CD8-positive, alpha-beta T cell (primary cell): ENCODE measurements at regions of chr19 and their contacts with region 1.

Region 1: DNA sequence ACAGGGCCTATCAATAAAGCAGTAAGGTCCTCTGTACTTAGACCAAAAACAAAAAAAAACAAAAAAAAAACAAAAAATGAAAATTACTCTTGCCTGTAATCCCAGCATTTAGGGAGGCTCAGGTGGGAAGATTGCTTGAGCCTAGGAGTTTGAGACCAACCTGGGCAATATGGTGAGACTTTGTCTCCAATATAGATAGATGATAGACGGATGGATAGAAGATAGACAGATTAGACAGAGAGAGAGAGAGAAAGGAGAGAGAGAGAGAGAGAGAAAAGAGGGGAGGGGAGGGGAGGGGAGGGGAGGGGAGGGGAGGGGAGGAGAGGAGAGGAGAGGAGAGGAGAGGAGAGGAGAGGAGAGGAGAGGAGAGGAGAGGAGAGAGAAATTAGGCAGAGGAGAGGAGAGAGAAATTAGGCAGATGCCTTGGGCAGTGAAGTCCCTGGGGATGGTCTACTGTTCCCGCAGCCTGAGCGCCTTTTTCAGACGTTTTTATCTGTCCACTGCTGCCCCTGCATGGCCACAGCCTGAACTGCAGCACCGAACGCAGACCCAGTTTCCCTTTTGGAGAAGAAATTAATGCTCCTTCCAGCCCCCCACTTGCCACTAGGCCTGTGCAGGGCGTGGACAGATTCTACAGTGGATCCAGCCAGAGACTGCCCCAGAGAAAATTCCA is 9.8 kb upstream of the ZNF627 start:
- DNase-seq: peak; percentile 57 to 82 (median 77)
- ATAC-seq: peak; percentile 100
- H3K4me3 ChIP-seq: no peak overlapping the region
- H3K4me3 Mint-ChIP-seq: no peak overlapping the region
- H3K27ac ChIP-seq: no peak overlapping the region
- H3K27ac Mint-ChIP-seq: no peak overlapping the region
- H3K4me1 ChIP-seq: no peaks in the 10 kb centered on the region
- H3K4me1 Mint-ChIP-seq: peaks cover 2% of the 10 kb centered on the region
- H3K27me3 ChIP-seq: no peaks in the 10 kb centered on the region
- H3K27me3 Mint-ChIP-seq: no peaks in the 10 kb centered on the region
- CTCF ChIP-seq: peak; percentile 85

Region 2: DNA sequence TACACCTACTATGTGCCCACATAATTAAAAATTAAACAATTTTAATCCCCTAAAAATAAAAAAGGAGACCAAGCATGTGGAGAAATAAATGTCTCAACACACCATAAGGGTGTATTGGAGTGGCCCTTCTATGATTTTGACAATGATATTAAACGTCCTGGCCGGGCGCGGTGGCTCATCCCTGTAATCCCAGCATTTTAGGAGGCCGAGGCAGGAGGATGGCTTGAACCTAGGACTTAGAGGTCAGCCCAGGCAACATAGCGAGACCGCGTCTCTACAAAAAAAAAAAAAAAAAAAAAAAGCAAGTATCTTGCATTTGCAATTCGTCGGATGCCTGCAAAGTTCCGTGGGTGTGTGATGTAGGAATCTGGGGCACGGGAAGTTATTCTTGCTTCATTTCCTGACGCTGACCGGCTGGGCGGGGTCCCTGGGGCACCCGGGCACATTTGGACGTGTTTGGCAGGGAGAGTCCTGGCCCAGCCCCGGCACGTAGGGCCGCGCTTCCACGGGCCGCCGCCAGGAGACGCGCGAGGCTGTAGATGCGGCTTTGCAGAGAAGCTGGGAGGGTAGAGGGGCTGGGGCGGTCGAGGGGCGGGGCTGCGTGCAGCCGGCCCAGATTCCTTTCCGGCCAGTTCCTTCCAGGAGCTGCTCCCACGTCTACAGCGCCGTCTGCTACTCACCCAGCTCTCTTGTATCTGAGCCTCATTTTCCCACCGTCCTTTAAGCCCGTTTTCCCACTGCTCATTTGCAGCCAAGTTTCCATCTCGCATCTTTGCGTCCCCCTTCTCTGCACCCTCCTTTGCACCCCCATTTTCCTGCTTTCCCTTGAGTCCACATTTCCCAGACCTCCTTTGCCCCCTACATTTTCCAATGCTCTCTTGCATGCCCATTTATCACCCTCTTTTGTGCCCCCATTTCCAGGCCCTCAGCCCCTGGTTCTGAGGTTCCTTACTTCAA is 293.7 kb before region 1 on chr19:
- CTCF ChIA-PET with region 1: interaction called, 4 read pairs
- POLR2A ChIA-PET with region 1: no interaction called
- intact Hi-C with region 1: loop called in 1 of 2 experiments (anchors 2 kb)
- DNase-seq: peak; percentile 68 to 84 (median 76)
- ATAC-seq: peak; percentile 99
- H3K4me3 ChIP-seq: no peak overlapping the region
- H3K4me3 Mint-ChIP-seq: no peak overlapping the region
- H3K27ac ChIP-seq: no peak overlapping the region
- H3K27ac Mint-ChIP-seq: no peak overlapping the region
- H3K4me1 ChIP-seq: peaks cover 8% of the 10 kb centered on the region
- H3K4me1 Mint-ChIP-seq: peaks cover 4% of the 10 kb centered on the region
- H3K27me3 ChIP-seq: peaks cover 0 to 12% of the 10 kb centered on the region in 2 experiments
- H3K27me3 Mint-ChIP-seq: peaks cover 24% of the 10 kb centered on the region
- CTCF ChIP-seq: peak; percentile 90

Region 3: DNA sequence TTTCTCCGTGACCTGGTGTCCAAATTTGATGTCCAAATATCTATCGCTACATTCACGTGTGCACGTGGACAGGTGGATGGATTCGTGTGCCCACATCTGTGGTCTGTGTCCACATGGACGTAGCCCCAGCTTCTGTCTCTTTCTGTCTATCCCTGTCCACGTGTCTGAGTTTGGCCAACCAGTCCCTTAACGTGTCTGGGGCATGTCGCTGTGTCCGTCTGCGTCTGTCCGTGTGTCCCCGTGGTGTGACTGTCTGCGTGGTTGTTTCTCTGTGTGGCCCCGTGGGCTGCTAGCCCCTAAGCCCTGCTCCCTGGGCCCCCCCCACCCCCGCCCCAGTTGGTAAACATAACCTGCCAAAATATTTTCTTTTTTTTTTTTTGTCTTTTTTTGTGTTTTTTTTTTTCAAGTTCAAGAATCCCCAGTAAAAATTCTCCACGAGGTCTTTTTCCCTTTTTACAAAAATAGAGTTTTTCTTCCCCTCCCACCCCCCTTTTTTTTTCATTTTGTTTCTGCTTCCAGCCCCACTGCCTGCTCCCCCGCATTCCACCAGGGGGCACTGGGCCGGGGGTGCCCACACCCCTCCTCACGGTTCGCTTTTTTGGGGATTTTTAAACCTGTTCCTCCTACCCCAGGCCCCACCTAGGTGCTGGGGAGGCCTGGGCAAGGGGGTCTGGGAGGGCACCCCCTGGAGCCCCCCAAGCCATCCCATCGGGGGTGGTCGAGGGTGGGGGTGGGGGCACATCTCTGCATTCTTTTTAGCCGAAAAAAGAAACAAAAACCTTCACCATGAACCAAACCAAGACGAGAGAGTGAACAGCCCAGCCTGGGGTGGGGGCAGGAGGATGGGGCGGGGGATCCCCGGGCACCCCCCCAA is 133.7 kb before region 1 on chr19:
- CTCF ChIA-PET with region 1: interaction called, 3 read pairs
- POLR2A ChIA-PET with region 1: no interaction called
- intact Hi-C with region 1: loop called in 1 of 2 experiments (anchors 2 kb)
- DNase-seq: peak in 3 of 9 experiments; percentile 19 to 42 (median 35)
- ATAC-seq: no peak
- H3K4me3 ChIP-seq: no peak overlapping the region
- H3K4me3 Mint-ChIP-seq: no peak overlapping the region
- H3K27ac ChIP-seq: no peak overlapping the region
- H3K27ac Mint-ChIP-seq: no peak overlapping the region
- H3K4me1 ChIP-seq: no peaks in the 10 kb centered on the region
- H3K4me1 Mint-ChIP-seq: no peaks in the 10 kb centered on the region
- H3K27me3 ChIP-seq: no peaks in the 10 kb centered on the region
- H3K27me3 Mint-ChIP-seq: peaks cover 10% of the 10 kb centered on the region
- CTCF ChIP-seq: peak; percentile 29

Region 4: DNA sequence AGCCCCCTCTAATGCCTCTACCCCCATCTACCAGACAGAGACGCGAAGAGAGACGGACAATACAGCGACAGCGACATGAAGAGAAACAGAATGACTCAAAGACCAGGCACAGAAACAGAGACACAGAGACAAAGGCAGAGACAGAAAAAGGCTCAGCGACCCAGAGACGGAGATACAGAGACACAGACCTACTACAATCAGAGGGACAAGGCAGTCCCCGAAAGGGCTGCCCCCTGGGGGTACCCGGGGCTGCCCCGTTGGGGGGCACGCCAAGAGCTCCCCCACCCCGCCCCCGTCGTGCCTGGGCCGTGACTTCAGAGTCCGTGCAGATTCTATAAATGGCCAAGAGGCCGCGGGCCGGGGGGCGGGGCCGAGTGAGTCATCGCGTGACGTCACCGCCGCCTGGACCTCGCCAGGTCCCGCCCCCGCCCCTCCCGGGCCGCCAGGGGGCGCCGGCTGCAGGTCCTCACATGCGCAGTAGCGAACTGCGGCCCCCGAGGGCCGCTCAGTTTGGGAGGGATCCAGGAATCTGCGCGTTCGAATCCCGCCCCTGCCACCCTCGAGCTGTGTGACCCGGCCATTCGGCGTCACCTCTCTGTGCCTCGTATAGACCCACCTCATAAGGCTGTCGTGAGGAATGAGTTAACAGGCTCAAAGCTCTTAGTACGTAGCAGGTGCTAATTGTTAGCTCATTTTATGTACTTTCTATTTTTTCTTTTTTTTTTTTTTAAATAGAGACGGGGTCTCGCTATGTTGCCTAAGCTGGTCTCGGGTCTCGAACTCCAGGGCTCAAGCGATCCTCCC is 51.4 kb before region 1 on chr19:
- CTCF ChIA-PET with region 1: interaction called, 6 read pairs
- POLR2A ChIA-PET with region 1: no interaction called
- intact Hi-C with region 1: loop called (anchors 1 kb)
- DNase-seq: peak; percentile 70 to 91 (median 77)
- ATAC-seq: peak; percentile 87
- H3K4me3 ChIP-seq: peak overlapping the region; percentile 23 to 44
- H3K4me3 Mint-ChIP-seq: peak overlapping the region; percentile 66
- H3K27ac ChIP-seq: peak overlapping the region in 1 of 2 experiments; percentile 76
- H3K27ac Mint-ChIP-seq: peak overlapping the region; percentile 74
- H3K4me1 ChIP-seq: peaks cover 11% of the 10 kb centered on the region
- H3K4me1 Mint-ChIP-seq: peaks cover 8% of the 10 kb centered on the region
- H3K27me3 ChIP-seq: peaks cover 8 to 12% of the 10 kb centered on the region in 2 experiments
- H3K27me3 Mint-ChIP-seq: peaks cover 12% of the 10 kb centered on the region
- CTCF ChIP-seq: peak; percentile 78